ENCODE measurements at regions of chr10 and their contacts with region 1.

Region 1: GRCh38 chr10:102231357-102232318 is 5.5 kb downstream of the ELOVL3 start:
- DNase-seq: peak; percentile 33
- ATAC-seq: peak; percentile 78
- H3K4me3 ChIP-seq: peak overlapping the region; percentile 44 to 49
- H3K27ac ChIP-seq: no peak overlapping the region
- H3K4me1 ChIP-seq: no peaks in the 10 kb centered on the region
- H3K27me3 ChIP-seq: peaks cover 5% of the 10 kb centered on the region
- CTCF ChIP-seq: peak; percentile 99

Region 2: GRCh38 chr10:102262744-102263370 is 31.2 kb after region 1 on chr10:
- CTCF ChIA-PET with region 1: interaction called, 11 read pairs
- POLR2A ChIA-PET with region 1: no interaction called
- in situ Hi-C with region 1: no loop called
- intact Hi-C with region 1: no loop called
- DNase-seq: no peak
- ATAC-seq: no peak
- H3K4me3 ChIP-seq: no peak overlapping the region
- H3K27ac ChIP-seq: no peak overlapping the region
- H3K4me1 ChIP-seq: no peaks in the 10 kb centered on the region
- H3K27me3 ChIP-seq: no peaks in the 10 kb centered on the region
- CTCF ChIP-seq: no peak

Region 3: DNA sequence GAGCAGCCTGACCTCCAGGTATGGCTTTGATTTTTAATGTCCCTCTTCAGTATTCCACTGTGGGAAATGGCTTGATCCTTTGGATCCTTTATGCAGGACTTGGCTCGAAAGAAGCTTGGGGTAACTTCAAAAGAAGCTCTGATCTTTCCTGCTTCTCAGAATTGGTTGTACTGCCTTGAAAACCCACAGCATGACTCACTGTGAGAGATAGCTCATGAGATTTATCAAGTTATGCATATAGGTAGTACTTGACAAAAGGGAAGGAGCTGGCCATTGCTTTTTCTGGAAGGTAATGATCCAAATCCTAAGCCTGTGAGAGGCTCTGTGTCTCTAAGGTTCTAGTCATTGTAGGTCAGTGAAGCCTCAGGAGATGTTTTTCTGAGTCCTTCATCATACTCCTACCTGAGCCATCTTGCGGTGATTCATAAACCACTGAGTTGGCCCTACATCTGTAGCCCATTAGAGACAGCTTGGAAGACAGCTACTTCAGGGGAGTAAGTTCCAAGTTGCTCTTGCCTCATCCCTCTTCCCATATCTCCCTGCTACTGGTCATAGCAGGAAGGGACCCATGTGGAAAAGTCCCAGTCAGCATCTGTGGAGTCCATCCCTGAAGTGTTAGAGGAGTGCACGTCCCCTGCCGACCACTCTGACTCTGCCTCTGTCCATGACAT is 127.2 kb after region 1 on chr10:
- CTCF ChIA-PET with region 1: interaction called, 15 read pairs
- POLR2A ChIA-PET with region 1: no interaction called
- in situ Hi-C with region 1: loop called (anchors 5 kb)
- intact Hi-C with region 1: no loop called
- DNase-seq: no peak
- ATAC-seq: no peak
- H3K4me3 ChIP-seq: no peak overlapping the region
- H3K27ac ChIP-seq: no peak overlapping the region
- H3K4me1 ChIP-seq: no peaks in the 10 kb centered on the region
- H3K27me3 ChIP-seq: no peaks in the 10 kb centered on the region
- CTCF ChIP-seq: no peak

Region 4: GRCh38 chr10:102420810-102421644 is 189.4 kb after region 1 on chr10 and contains the start of gene FBXL15:
- CTCF ChIA-PET with region 1: interaction called, 16 read pairs
- POLR2A ChIA-PET with region 1: no interaction called
- in situ Hi-C with region 1: no loop called
- intact Hi-C with region 1: no loop called
- DNase-seq: peak; percentile 93
- ATAC-seq: peak; percentile 82
- H3K4me3 ChIP-seq: peak within 1 kb of the TSS; percentile 91 to 94
- H3K27ac ChIP-seq: peak within 1 kb of the TSS; percentile 98
- H3K4me1 ChIP-seq: peaks cover 11% of the 10 kb centered on the region
- H3K27me3 ChIP-seq: no peaks in the 10 kb centered on the region
- CTCF ChIP-seq: no peak
- total RNA-seq, gene FBXL15: 7.9 TPM

Region 5: GRCh38 chr10:102476466-102477141 is 245.0 kb after region 1 on chr10:
- CTCF ChIA-PET with region 1: interaction called, 11 read pairs
- POLR2A ChIA-PET with region 1: no interaction called
- in situ Hi-C with region 1: no loop called
- intact Hi-C with region 1: no loop called
- DNase-seq: no peak
- ATAC-seq: 0 out of 2 replicates have a peak, but pooled peaks have one; percentile 3
- H3K4me3 ChIP-seq: no peak overlapping the region
- H3K27ac ChIP-seq: no peak overlapping the region
- H3K4me1 ChIP-seq: no peaks in the 10 kb centered on the region
- H3K27me3 ChIP-seq: no peaks in the 10 kb centered on the region
- CTCF ChIP-seq: no peak